ENCODE measurements at regions of chr2 and their contacts with region 1.

Region 1: GRCh38 chr2:121076885-121077549 is 208.0 kb downstream of the TFCP2L1 start:
- DNase-seq: peak; percentile 89
- H3K4me3 Mint-ChIP-seq: no peak overlapping the region
- H3K27ac Mint-ChIP-seq: no peak overlapping the region
- H3K4me1 Mint-ChIP-seq: no peaks in the 10 kb centered on the region
- H3K27me3 Mint-ChIP-seq: peaks cover 59% of the 10 kb centered on the region
- CTCF ChIP-seq: peak; percentile 89

Region 2: DNA sequence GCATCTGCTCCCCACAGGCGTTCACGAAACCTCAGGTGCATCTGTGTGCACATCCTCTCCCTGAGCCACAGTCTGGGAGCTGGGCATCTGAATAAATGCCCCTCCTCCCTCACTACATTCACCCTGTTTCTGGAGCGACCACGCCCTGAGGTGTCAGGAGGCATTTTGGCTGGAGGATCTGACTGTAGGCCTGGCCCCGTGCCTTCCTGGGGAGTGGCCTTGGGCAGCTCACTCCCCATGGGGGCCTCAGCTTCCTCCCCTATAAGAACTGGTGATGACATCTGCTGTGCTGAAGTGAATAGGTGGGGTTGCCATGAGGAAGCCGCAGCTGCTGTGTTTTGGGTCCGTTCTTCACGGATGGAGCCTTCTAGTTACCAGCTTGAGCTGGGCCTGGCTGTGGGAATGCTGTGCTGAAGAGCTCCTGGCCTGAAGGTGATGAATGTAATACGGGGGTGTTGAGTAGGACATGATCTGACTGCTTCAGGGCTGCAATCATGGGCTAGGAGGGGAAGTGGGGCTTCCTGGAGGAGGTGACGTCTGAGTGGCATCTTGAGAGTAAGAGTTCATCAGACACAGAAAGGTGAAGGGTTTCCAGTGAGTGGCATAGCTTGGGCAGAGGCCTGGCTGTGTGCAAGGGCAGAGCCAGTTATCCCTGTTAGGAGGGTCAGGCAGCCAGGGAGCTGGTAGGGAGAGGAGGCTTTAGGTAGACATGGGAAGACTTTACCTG is 283.2 kb before region 1 on chr2:
- CTCF ChIA-PET with region 1: no interaction called
- intact Hi-C with region 1: no loop called
- DNase-seq: no peak
- H3K4me3 Mint-ChIP-seq: no peak overlapping the region
- H3K27ac Mint-ChIP-seq: no peak overlapping the region
- H3K4me1 Mint-ChIP-seq: peaks cover 24% of the 10 kb centered on the region
- H3K27me3 Mint-ChIP-seq: no peaks in the 10 kb centered on the region
- CTCF ChIP-seq: no peak

Region 3: GRCh38 chr2:120949027-120949956 is 127.7 kb before region 1 on chr2:
- CTCF ChIA-PET with region 1: no interaction called
- intact Hi-C with region 1: loop called (anchors 10 kb)
- DNase-seq: peak; percentile 67
- H3K4me3 Mint-ChIP-seq: no peak overlapping the region
- H3K27ac Mint-ChIP-seq: no peak overlapping the region
- H3K4me1 Mint-ChIP-seq: peaks cover 24% of the 10 kb centered on the region
- H3K27me3 Mint-ChIP-seq: no peaks in the 10 kb centered on the region
- CTCF ChIP-seq: peak; percentile 41

Region 4: GRCh38 chr2:121059651-121060649 is 17.1 kb before region 1 on chr2:
- CTCF ChIA-PET with region 1: interaction called, 15 read pairs
- intact Hi-C with region 1: no loop called
- DNase-seq: no peak
- H3K4me3 Mint-ChIP-seq: no peak overlapping the region
- H3K27ac Mint-ChIP-seq: no peak overlapping the region
- H3K4me1 Mint-ChIP-seq: no peaks in the 10 kb centered on the region
- H3K27me3 Mint-ChIP-seq: peaks cover 81% of the 10 kb centered on the region
- CTCF ChIP-seq: no peak

Measured in Calu3 (cell line).